ENCODE measurements at regions of chr15 and their contacts with region 1.

Region 1: GRCh38 chr15:73633111-73633990 is at the start of gene NPTN:
- DNase-seq: peak; percentile 99
- H3K4me3 ChIP-seq: peak within 1 kb of the TSS; percentile 87 to 99 (median 91)
- H3K27ac ChIP-seq: peak within 1 kb of the TSS; percentile 96 to 100 (median 99)
- H3K4me1 ChIP-seq: peaks cover 0 to 46% (median 41%) of the 10 kb centered on the region in 4 donors
- H3K27me3 ChIP-seq: no peaks in the 10 kb centered on the region
- CTCF ChIP-seq: no peak
- EP300 ChIP-seq: peak in 1 of 4 donors; percentile 49
- POLR2A ChIP-seq: peak; percentile 52 to 81
- total RNA-seq, gene NPTN: 216 to 320 (median 299) TPM

Region 2: DNA sequence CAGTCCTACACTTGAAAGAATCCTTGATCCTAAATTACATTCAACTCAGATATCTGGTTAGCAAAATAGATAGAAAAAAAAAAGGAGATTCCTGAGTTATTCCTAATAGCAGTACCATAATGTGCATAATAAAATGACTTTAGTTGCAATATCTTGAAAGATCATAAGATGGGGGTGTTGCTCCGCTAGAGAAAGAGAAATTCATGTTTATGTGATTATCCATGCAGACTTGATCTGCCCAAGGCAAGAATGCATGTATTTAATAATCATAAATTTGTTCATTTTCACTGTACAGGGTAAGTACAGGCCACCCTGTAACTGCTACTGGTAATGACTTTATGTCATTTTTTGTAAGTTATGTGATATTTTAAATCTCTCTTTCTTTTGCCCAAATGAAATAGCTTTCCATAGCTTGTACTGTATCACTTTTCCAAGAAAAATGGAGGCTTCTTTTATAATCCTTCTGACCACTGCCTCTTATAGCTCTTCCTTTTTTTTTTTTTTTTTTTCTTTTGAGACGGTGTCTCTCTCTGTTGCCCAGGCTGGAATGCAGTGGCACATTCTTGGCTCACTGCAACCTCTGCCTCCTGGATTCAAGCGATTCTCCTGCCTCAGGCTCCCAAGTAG is 349.1 kb before region 1 on chr15:
- intact Hi-C with region 1: loop called (anchors 10 kb)
- DNase-seq: no peak
- H3K4me3 ChIP-seq: no peak overlapping the region
- H3K27ac ChIP-seq: peak overlapping the region in 1 of 4 donors; percentile 55
- H3K4me1 ChIP-seq: peaks cover 0 to 33% (median 12%) of the 10 kb centered on the region in 4 donors
- H3K27me3 ChIP-seq: no peaks in the 10 kb centered on the region
- CTCF ChIP-seq: no peak
- EP300 ChIP-seq: no peak
- POLR2A ChIP-seq: no peak

Region 3: GRCh38 chr15:73573572-73573971 is 59.8 kb before region 1 on chr15:
- intact Hi-C with region 1: loop called (anchors 5 kb)
- DNase-seq: peak; percentile 90
- H3K4me3 ChIP-seq: no peak overlapping the region
- H3K27ac ChIP-seq: peak overlapping the region; percentile 63 to 68 (median 64)
- H3K4me1 ChIP-seq: peaks cover 0 to 38% (median 27%) of the 10 kb centered on the region in 4 donors
- H3K27me3 ChIP-seq: no peaks in the 10 kb centered on the region
- CTCF ChIP-seq: no peak
- EP300 ChIP-seq: peak in 2 of 4 donors; percentile 13 to 57
- POLR2A ChIP-seq: no peak

Region 4: DNA sequence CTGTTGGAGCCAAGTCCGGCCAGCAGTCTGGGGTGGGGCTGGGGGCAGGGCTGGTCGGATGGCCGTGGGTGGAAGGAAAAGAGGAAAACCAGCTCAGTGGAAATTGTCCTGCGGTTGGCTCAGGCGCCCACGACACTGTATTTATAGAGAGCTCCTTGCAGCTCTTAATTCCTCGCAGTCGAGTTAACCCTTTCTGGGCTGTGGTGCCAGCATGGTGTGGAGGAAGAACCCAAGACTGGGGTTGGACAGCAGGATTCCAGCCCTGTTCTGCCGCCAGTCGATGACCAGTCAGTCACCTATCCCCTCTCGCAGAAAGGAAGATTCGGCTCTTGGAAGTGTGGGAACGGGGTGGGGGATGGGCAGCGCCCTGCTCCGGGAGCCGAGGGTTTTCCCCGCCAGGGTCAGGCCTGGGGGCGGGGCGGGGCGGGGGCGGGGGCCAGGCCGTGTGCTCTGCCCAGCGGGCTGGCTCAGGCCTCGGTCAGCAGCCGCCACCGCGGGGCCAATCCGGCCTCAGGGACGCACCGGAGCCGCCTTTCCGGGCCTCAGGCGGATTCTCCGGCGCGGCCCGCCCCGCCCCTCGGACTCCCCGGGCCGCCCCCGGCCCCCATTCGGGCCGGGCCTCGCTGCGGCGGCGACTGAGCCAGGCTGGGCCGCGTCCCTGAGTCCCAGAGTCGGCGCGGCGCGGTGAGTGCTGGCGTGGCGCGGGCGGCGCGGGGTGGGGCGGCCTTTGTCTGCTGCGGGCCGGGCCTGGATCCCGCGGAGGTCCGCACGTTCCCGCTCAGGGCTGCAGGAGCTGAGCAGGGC is 50.6 kb after region 1 on chr15 and contains the start of gene CD276:
- intact Hi-C with region 1: loop called (anchors 2 kb)
- DNase-seq: peak; percentile 87
- H3K4me3 ChIP-seq: peak within 1 kb of the TSS; percentile 63 to 94 (median 84)
- H3K27ac ChIP-seq: peak within 1 kb of the TSS; percentile 84 to 95 (median 88)
- H3K4me1 ChIP-seq: peaks cover 0 to 51% (median 48%) of the 10 kb centered on the region in 4 donors
- H3K27me3 ChIP-seq: no peaks in the 10 kb centered on the region
- CTCF ChIP-seq: no peak
- EP300 ChIP-seq: no peak
- POLR2A ChIP-seq: no peak
- total RNA-seq, gene CD276: 20.4 to 59.8 (median 36.7) TPM

Region 5: DNA sequence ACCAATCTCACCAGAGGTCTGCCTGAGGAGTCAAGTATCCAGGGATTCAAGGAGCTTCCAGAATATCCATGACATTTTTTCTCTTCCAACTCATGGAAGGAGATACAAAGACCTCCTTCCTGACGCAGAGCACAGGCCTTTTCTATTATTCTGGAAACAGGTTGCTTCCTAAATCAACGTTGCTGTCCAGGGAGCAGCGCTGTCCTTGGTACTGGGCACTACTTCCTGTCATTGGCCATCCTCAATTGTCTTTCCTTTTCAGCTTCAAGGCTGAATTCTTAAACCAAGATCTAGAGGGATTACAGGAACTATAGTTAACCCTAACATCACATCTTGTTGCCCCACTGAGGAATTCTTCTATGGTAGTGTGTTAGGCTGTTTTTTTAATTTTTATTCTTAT is 189.6 kb after region 1 on chr15:
- intact Hi-C with region 1: no loop called
- DNase-seq: no peak
- H3K4me3 ChIP-seq: no peak overlapping the region
- H3K27ac ChIP-seq: no peak overlapping the region
- H3K4me1 ChIP-seq: no peaks in the 10 kb centered on the region
- H3K27me3 ChIP-seq: no peaks in the 10 kb centered on the region
- CTCF ChIP-seq: no peak
- EP300 ChIP-seq: no peak
- POLR2A ChIP-seq: no peak

Measured in sigmoid colon (tissue), 7 donors.